HCT116 (cell line): ENCODE measurements at regions of chr7 and their contacts with region 1.

Region 1: DNA sequence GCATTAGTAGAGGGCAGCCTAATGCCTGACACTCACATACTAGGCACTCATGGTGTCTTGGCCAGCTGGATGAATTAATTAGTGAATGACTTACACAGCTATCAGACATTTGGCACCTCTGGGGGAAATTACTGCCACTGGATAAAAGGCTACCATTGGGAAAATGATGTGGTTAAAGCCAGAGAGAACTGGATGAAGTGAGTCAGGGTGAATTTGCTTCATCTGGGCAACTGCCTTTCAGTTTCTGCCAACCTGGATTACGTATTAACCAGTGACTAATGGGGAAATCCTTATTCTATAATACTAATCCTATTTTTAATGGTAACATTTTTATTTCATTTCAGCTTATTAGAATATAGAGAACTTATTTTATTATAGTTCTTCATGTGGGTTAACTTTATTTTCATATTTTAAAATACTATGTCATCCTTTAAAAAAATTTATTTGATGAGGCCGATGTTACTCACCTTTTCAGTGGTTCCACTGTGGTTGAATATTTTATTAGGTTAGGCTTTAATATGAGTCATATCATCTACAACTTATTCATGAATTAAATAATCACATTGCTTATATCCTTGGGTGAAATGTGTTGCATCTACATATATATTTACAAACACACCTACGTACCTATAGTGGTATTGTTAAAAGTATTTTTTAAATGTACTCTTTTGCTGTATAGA is 85.6 kb upstream of the CAPZA2 start:
- DNase-seq: peak; percentile 97
- ATAC-seq: peak; percentile 73
- H3K4me3 ChIP-seq: peak overlapping the region in 1 of 2 experiments; percentile 20; a peak in 1 of 4 replicates
- H3K27ac ChIP-seq: peak overlapping the region; percentile 97
- H3K4me1 ChIP-seq: peaks cover 90 to 100% of the 10 kb centered on the region in 2 experiments
- H3K27me3 ChIP-seq: no peaks in the 10 kb centered on the region
- CTCF ChIP-seq: no peak
- POLR2A ChIP-seq: no peak
- RAD21 ChIP-seq: no peak; the same call in 1 of the 2 replicates

Region 2: DNA sequence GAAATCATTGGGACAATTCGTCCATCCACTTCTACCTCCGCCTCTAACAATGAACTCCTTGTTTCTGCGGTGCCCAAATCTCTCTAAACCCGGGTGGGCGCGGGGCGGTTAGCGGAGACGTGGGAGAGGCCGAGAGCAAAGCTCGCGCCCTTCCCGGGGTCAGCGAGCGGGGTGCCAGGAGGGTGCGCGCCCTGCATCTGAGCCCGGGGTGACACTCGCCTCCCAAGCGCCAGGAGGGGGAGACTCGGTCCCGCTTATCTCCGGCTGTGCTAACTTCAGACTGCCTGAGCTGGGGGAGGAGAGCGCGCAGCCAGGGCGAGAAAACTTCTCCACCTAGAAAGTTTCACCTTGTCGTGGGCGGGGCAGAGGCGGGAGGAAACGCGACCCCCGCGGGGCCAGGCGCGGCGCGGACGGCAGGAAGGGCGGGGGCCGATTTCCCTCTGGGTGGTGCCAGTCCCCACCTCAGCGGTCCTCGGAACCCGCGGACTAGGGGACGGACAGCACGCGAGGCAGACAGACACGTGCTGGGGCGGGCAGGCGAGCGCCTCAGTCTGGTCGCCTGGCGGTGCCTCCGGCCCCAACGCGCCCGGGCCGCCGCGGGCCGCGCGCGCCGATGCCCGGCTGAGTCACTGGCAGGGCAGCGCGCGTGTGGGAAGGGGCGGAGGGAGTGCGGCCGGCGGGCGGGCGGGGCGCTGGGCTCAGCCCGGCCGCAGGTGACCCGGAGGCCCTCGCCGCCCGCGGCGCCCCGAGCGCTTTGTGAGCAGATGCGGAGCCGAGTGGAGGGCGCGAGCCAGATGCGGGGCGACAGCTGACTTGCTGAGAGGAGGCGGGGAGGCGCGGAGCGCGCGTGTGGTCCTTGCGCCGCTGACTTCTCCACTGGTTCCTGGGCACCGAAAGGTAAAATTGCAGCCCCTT is 104.8 kb before region 1 on chr7 and contains the start of gene MET:
- CTCF ChIA-PET with region 1: interaction called, 3 read pairs
- POLR2A ChIA-PET with region 1: no interaction called
- RAD21 ChIA-PET with region 1: interaction called, 4 read pairs
- intact Hi-C with region 1: loop called (anchors 10 kb)
- DNase-seq: peak; percentile 84
- ATAC-seq: peak; percentile 84
- H3K4me3 ChIP-seq: peak within 1 kb of the TSS; percentile 86 to 90
- H3K27ac ChIP-seq: peak within 1 kb of the TSS; percentile 90
- H3K4me1 ChIP-seq: peaks cover 42 to 56% of the 10 kb centered on the region in 2 experiments
- H3K27me3 ChIP-seq: no peaks in the 10 kb centered on the region
- CTCF ChIP-seq: peak; percentile 49 to 84 (median 56)
- POLR2A ChIP-seq: peak; percentile 68
- RAD21 ChIP-seq: peak; percentile 93
- total RNA-seq, gene MET: 200 TPM

Region 3: GRCh38 chr7:116687801-116688201 is 88.9 kb before region 1 on chr7:
- CTCF ChIA-PET with region 1: no interaction called
- POLR2A ChIA-PET with region 1: interaction called, 5 read pairs
- RAD21 ChIA-PET with region 1: no interaction called
- intact Hi-C with region 1: loop called (anchors 5 kb)
- DNase-seq: peak; percentile 73
- ATAC-seq: peak; percentile 43
- H3K4me3 ChIP-seq: peak overlapping the region in 1 of 2 experiments; percentile 35; a peak in 2 of 4 replicates
- H3K27ac ChIP-seq: peak overlapping the region; percentile 92
- H3K4me1 ChIP-seq: peaks cover 89 to 100% of the 10 kb centered on the region in 2 experiments
- H3K27me3 ChIP-seq: no peaks in the 10 kb centered on the region
- CTCF ChIP-seq: no peak
- POLR2A ChIP-seq: no peak
- RAD21 ChIP-seq: no peak; the same call in 1 of the 2 replicates

Region 4: DNA sequence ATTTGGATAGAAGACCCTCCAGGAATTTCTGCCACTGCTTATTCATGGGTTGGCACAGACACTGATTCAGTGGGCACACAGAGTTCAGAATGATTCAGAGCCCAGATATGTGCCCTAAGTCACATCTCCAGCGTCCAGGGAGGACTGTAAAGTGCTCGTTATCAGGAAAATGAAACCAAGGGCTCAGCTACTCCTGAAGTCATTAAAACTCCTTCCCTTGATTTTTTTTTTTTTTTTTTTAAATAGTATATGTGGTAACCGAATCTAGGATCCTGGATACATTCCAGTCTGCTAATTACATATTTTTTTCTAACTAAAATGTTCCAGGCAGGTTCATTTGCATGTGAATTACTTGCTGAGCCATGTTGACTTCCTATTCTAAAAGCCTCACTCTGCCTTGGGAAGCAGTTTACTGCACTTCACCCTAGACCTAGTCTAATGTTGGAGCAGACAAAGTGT is 70.1 kb before region 1 on chr7:
- CTCF ChIA-PET with region 1: no interaction called
- POLR2A ChIA-PET with region 1: no interaction called
- RAD21 ChIA-PET with region 1: no interaction called
- intact Hi-C with region 1: loop called (anchors 5 kb)
- DNase-seq: peak; percentile 81
- ATAC-seq: peak; percentile 88
- H3K4me3 ChIP-seq: peak overlapping the region; percentile 21 to 45
- H3K27ac ChIP-seq: peak overlapping the region; percentile 91
- H3K4me1 ChIP-seq: peaks cover 96 to 100% of the 10 kb centered on the region in 2 experiments
- H3K27me3 ChIP-seq: no peaks in the 10 kb centered on the region
- CTCF ChIP-seq: no peak
- POLR2A ChIP-seq: no peak
- RAD21 ChIP-seq: no peak

Region 5: GRCh38 chr7:116802746-116803152 is 26.0 kb after region 1 on chr7:
- CTCF ChIA-PET with region 1: no interaction called
- POLR2A ChIA-PET with region 1: interaction called, 3 read pairs
- RAD21 ChIA-PET with region 1: no interaction called
- intact Hi-C with region 1: loop called (anchors 1 kb)
- DNase-seq: peak; percentile 63
- ATAC-seq: peak; percentile 24
- H3K4me3 ChIP-seq: peak overlapping the region in 1 of 2 experiments; percentile 48; a peak in 2 of 4 replicates
- H3K27ac ChIP-seq: peak overlapping the region; percentile 90
- H3K4me1 ChIP-seq: peaks cover 71 to 81% of the 10 kb centered on the region in 2 experiments
- H3K27me3 ChIP-seq: no peaks in the 10 kb centered on the region
- CTCF ChIP-seq: peak; percentile 37 to 65 (median 39); a peak in 4 of 6 replicates
- POLR2A ChIP-seq: no peak
- RAD21 ChIP-seq: peak; percentile 71

Region 6: DNA sequence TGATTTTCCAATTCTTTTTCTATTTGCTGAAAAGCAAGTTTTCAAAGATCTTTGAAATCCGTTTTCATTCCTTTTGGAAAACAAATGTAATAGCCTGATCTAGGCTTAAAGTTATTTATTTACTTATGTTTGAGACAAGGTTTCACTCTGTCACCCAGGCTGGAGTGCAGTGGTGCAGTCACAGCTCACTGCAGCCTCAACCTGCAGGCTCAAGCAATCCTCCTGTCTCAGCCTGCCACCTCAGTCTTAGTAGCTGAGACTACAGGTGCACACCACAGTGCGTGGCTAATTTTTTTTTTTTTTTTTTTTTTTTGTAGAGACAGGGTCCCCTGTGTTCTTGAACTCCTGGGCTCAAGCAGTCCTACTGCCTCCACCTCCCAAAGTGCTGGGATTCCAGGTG is 181.1 kb after region 1 on chr7:
- CTCF ChIA-PET with region 1: no interaction called
- POLR2A ChIA-PET with region 1: no interaction called
- RAD21 ChIA-PET with region 1: no interaction called
- intact Hi-C with region 1: no loop called
- DNase-seq: no peak
- ATAC-seq: no peak
- H3K4me3 ChIP-seq: no peak overlapping the region
- H3K27ac ChIP-seq: no peak overlapping the region
- H3K4me1 ChIP-seq: peaks cover 6 to 15% of the 10 kb centered on the region in 2 experiments; a peak in 3 of 4 replicates
- H3K27me3 ChIP-seq: no peaks in the 10 kb centered on the region
- CTCF ChIP-seq: no peak
- POLR2A ChIP-seq: no peak
- RAD21 ChIP-seq: no peak